HepG2 (cell line): ENCODE measurements at regions of chr20 and their contacts with region 1.

Region 1: DNA sequence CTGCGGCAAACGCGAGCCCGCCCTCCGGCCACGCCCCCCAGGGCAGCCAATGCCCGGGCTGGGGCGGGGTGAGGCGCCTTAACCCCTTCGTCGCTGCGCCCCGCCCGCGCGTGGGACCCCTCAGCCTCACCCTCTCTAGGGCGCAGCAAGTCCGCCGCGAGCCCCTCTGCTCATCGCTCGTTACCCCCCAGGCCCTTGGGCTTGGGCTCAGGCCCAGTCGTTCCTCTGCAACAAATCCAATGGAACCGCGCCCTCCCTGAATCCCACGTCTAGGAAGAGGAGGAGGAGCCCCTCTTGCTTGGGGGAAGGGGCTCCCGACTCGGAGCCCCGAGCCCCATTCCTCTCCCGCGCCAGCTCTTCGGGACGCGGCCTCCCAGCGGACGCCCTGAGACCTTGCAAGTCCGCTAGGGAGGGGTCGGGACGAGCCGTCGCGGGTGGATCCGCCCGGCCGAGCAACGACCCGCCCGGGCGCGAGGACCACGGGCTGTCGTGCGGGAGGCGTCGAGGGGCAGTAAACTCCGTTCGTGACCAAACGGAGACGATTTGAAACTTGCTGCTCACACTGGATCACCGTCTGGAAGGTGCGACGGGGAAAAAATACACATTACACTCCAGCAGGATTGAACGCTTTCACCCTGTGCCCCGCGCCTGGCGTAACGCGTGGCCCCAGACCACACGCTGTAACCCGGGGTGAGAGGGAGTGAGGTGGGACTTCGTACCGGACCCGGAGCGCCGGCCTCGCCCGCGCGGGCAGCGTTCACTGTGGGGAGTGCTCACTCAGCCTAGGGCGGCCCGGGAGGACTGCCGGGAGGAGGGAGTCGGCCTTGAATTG is 477 bp upstream of the LZTS3 start:
- DNase-seq: peak; percentile 85
- ATAC-seq: peak; percentile 76
- H3K4me3 ChIP-seq: peak overlapping the region; percentile 85 to 99 (median 94)
- H3K27ac ChIP-seq: peak overlapping the region; percentile 92
- H3K4me1 ChIP-seq: peaks cover 54% of the 10 kb centered on the region
- H3K27me3 ChIP-seq: no peaks in the 10 kb centered on the region; a peak in 1 of 5 replicates
- CTCF ChIP-seq: peak; percentile 39; the same call in 1 of the 2 replicates
- EP300 ChIP-seq: peak in 1 of 2 experiments; percentile 42; a peak in 3 of 4 replicates
- POLR2A ChIP-seq: peak; percentile 81 to 82
- RAD21 ChIP-seq: peak; percentile 39; the same call in 1 of the 2 replicates

Region 2: GRCh38 chr20:3051385-3052019 is 122.3 kb before region 1 on chr20:
- CTCF ChIA-PET with region 1: no interaction called
- POLR2A ChIA-PET with region 1: no interaction called
- in situ Hi-C with region 1: no loop called
- intact Hi-C with region 1: loop called (anchors 5 kb)
- DNase-seq: no peak
- ATAC-seq: peak; percentile 62
- H3K4me3 ChIP-seq: no peak overlapping the region
- H3K27ac ChIP-seq: peak overlapping the region; percentile 2
- H3K4me1 ChIP-seq: peaks cover 42% of the 10 kb centered on the region
- H3K27me3 ChIP-seq: no peaks in the 10 kb centered on the region; a peak in 1 of 5 replicates
- CTCF ChIP-seq: no peak
- EP300 ChIP-seq: no peak
- POLR2A ChIP-seq: no peak
- RAD21 ChIP-seq: no peak; the same call in 1 of the 2 replicates

Region 3: DNA sequence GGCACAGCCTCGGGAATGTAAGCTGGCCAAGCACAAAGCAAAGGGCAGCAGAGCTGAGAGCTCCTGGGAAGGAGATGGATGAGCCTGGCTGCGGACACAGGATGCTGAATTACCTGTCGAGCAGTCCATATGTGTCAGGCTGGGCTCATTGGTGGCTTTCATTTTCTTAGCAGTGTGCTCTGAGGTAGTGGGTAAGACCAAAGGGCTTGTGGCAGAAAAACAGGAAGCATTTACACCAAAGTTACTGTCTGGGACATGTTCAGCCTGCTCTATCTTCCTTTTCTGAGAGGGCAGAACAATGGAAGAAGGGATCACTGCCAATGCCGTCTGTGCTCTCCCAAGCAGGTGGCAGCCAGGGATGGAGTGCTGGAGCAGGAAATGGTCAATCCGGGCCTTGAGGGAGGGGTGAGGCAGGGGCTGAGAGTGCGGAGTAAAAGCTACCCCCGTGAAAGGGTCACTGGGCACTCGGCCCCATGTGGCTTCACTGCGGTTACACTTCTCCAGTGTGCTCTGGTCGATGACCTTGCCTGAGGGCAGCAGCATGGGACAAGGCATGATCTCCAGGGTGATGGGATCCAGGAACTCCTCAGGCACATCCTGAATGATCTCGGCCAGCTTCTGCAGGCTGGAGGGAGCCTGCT is 52.4 kb before region 1 on chr20:
- CTCF ChIA-PET with region 1: interaction called, 3 read pairs
- POLR2A ChIA-PET with region 1: interaction called, 4 read pairs
- in situ Hi-C with region 1: no loop called
- intact Hi-C with region 1: loop called (anchors 1 kb)
- DNase-seq: no peak
- ATAC-seq: no peak
- H3K4me3 ChIP-seq: no peak overlapping the region
- H3K27ac ChIP-seq: peak overlapping the region; percentile 63
- H3K4me1 ChIP-seq: peaks cover 42% of the 10 kb centered on the region
- H3K27me3 ChIP-seq: no peaks in the 10 kb centered on the region
- CTCF ChIP-seq: no peak
- EP300 ChIP-seq: no peak
- POLR2A ChIP-seq: no peak
- RAD21 ChIP-seq: no peak

Region 4: DNA sequence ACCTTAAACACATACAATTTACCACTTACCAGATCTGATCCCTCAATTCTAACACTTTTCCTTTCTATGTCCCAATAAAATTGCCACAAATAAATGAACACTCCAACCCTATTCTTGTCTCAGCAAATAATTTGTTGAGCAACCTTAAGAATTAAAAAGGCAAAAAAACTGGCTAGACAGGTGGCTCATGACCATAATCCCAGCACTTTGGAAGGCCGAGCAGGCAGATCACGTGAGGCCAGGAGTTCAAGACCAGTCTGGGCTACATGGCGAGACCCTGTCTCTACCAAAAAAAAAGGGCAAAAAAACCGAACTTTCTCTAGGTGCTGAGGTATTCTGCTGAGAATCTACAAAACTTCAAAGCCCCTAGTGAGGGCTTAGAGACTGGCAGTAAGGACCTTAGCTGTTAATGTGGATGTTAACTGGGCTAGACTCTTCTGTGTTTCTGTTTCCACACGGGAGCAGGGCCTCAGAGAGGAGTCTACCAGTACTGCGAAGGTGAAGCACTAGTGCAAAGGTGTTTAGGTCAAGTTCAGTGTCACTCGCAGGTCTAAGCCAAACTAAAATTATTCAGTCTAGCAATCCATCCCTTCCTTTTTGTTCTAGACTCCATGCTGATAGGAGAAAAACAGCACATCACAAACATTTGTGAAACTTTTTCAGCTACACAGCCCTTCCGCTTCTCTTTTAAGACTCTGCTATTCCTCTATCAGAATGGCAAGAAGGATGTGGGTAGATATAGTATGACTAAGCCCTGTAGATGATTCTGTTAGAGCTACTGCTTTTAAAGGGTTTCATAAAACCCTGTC is 16.8 kb before region 1 on chr20:
- CTCF ChIA-PET with region 1: no interaction called
- POLR2A ChIA-PET with region 1: interaction called, 81 read pairs
- in situ Hi-C with region 1: no loop called
- intact Hi-C with region 1: loop called (anchors 1 kb)
- DNase-seq: no peak
- ATAC-seq: no peak
- H3K4me3 ChIP-seq: peak overlapping the region; percentile 90 to 95 (median 91); a peak in 3 of 6 replicates
- H3K27ac ChIP-seq: no peak overlapping the region
- H3K4me1 ChIP-seq: peaks cover 42% of the 10 kb centered on the region
- H3K27me3 ChIP-seq: no peaks in the 10 kb centered on the region; a peak in 1 of 5 replicates
- CTCF ChIP-seq: no peak
- EP300 ChIP-seq: no peak
- POLR2A ChIP-seq: no peak
- RAD21 ChIP-seq: no peak

Region 5: DNA sequence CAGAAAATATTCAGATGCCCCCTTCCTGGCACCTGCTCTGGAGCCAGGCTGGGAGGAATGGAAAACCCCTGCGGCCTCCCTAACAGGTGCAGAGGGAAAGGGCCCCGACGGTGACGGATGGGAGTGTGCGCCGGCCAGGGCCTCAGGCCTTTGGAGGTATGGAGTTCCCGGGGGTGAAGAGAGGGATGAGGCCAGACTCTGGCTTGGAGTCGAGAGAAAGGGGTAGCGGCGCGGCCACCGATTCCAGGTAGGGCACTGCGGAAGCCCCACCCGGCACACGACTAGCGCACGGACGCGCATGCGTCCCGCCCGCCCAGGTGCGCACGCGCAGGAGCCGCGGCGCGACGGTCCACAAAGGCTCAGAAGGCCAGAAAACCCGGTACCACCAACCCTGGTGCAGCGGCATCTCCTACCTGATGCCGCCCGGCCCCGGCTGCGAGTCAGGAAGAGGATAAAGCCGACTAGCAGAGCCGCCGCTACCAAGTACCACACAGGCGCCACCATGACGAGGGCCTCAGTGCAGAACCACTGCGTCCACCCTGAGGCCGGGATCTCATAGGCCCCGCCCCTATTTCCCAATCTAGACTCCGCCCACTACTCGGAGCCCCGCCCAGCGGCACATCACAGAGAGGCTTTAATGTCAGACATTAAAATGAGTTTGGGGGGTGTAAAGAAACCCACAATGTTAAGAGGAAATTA is 30.4 kb after region 1 on chr20 and contains the start of gene DDRGK1:
- CTCF ChIA-PET with region 1: no interaction called
- POLR2A ChIA-PET with region 1: interaction called, 11 read pairs
- in situ Hi-C with region 1: no loop called
- intact Hi-C with region 1: loop called (anchors 1 kb)
- DNase-seq: peak; percentile 85
- ATAC-seq: peak; percentile 84
- H3K4me3 ChIP-seq: peak within 1 kb of the TSS; percentile 76 to 98 (median 81)
- H3K27ac ChIP-seq: peak within 1 kb of the TSS; percentile 87
- H3K4me1 ChIP-seq: peaks cover 34% of the 10 kb centered on the region
- H3K27me3 ChIP-seq: peaks cover 0 to 6% of the 10 kb centered on the region in 2 experiments; a peak in 1 of 5 replicates
- CTCF ChIP-seq: peak; percentile 17; the same call in 1 of the 2 replicates
- EP300 ChIP-seq: no peak
- POLR2A ChIP-seq: peak; percentile 96
- RAD21 ChIP-seq: peak; percentile 73
- total RNA-seq, gene DDRGK1: 75.4 and 149 TPM in 2 replicates

Region 6: GRCh38 chr20:3209257-3209945 is 35.6 kb after region 1 on chr20 and contains the start of gene ITPA:
- CTCF ChIA-PET with region 1: no interaction called
- POLR2A ChIA-PET with region 1: interaction called, 11 read pairs
- in situ Hi-C with region 1: no loop called
- intact Hi-C with region 1: loop called (anchors 2 kb)
- DNase-seq: peak; percentile 75
- ATAC-seq: peak; percentile 78
- H3K4me3 ChIP-seq: peak within 1 kb of the TSS; percentile 89 to 99 (median 90)
- H3K27ac ChIP-seq: peak within 1 kb of the TSS; percentile 75
- H3K4me1 ChIP-seq: peaks cover 42% of the 10 kb centered on the region
- H3K27me3 ChIP-seq: peaks cover 0 to 6% of the 10 kb centered on the region in 2 experiments; a peak in 1 of 5 replicates
- CTCF ChIP-seq: 0 out of 2 replicates have a peak, but pooled peaks have one; percentile 12
- EP300 ChIP-seq: no peak; a peak in 1 of 4 replicates
- POLR2A ChIP-seq: peak; percentile 56 to 86
- RAD21 ChIP-seq: 0 out of 2 replicates have a peak, but pooled peaks have one; percentile 52
- total RNA-seq, gene ITPA: 101 and 103 TPM in 2 replicates